ENCODE measurements at regions of chr19 and their contacts with region 1.

Region 1: DNA sequence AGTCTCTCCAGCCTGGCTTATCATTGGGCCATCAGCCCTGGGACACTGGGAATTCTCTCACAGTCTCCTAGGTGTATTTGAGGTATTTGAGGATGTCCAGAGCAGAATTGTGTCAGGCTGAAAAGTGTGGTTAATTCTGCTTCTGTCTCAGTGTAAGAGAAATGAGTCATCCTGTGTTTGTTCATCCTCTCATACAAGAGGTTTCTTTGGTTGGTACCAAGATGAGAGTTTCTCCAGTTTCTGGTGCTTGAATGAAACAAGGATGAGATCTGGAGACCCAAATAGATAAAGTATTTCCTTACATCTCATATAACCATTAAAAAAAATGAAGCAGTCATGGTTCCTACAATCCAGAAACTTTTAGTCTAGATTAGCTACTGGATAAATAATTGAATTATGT is 7.7 kb downstream of the ZNF253 start:
- DNase-seq: no peak
- H3K4me3 Mint-ChIP-seq: no peak overlapping the region
- H3K27ac Mint-ChIP-seq: no peak overlapping the region
- H3K4me1 Mint-ChIP-seq: peaks cover 37% of the 10 kb centered on the region
- H3K27me3 Mint-ChIP-seq: no peaks in the 10 kb centered on the region

Region 2: DNA sequence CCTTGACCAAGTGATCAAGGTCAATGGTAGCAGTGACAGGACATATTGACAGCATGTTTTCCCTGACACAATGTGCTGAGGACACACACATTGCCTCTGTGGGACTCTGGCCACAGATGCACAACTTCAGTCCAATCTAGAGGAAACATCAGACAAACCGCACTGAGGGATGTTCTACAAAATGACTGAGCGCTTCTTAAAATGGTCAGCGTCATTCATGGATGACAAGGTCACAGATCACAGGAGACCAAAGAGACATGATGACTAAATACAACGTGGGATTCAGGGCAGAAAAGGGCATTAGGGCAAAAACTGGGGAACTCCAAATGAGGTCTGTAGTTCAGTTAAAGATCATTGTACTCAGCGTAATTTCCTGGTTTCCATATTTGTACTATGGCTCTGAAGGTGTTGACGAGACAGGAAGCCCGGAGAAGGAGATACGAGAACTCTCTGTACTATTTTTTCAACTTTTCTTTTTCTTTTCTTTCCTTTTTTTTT is 275.5 kb before region 1 on chr19:
- CTCF ChIA-PET with region 1: no interaction called
- POLR2A ChIA-PET with region 1: no interaction called
- intact Hi-C with region 1: loop called (anchors 5 kb)
- DNase-seq: peak; percentile 74
- H3K4me3 Mint-ChIP-seq: peak overlapping the region; percentile 75
- H3K27ac Mint-ChIP-seq: peak overlapping the region; percentile 100
- H3K4me1 Mint-ChIP-seq: peaks cover 81% of the 10 kb centered on the region
- H3K27me3 Mint-ChIP-seq: no peaks in the 10 kb centered on the region

Region 3: DNA sequence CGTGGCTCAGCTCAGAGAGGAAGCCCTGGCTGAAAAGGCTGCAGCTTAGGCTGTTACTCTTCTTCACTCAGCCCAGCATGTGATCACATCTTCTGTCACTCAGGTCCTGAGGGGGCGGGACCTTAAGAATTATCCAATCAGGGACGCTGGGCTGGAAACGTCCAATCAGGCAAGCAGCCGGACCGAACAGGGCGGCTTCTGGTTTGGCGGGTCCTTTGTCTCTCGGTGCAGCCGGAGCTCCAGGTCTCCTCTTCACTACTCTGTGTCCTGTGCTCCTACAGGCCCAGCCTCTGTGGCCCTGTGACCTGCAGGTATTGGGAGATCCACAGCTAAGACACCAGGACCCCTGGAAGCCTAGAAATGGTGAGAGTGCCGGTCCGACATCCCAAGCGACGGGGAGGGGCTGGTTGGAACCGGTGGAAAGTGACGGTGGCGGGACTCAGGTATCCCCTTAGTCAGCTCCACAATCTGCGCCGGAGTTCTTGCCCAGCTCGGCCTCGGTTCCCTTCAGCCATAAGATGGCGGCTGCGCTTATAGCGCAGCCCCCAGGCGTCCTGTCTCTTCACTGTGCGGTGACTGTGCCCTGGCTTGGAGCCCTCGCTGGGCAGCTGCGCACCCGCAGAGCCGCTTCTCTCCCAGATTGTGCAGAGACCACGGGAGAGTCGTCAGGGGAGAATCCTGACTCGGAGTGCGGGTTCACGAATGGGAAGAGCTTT is 27.5 kb after region 1 on chr19 and contains the start of gene ZNF93:
- CTCF ChIA-PET with region 1: interaction called, 4 read pairs
- POLR2A ChIA-PET with region 1: interaction called, 9 read pairs
- intact Hi-C with region 1: loop called (anchors 1 kb)
- DNase-seq: peak; percentile 96
- H3K4me3 Mint-ChIP-seq: peak within 1 kb of the TSS; percentile 98
- H3K27ac Mint-ChIP-seq: peak within 1 kb of the TSS; percentile 96
- H3K4me1 Mint-ChIP-seq: peaks cover 35% of the 10 kb centered on the region
- H3K27me3 Mint-ChIP-seq: no peaks in the 10 kb centered on the region
- total RNA-seq, gene ZNF93: 15.6 to 17.0 TPM

Region 4: DNA sequence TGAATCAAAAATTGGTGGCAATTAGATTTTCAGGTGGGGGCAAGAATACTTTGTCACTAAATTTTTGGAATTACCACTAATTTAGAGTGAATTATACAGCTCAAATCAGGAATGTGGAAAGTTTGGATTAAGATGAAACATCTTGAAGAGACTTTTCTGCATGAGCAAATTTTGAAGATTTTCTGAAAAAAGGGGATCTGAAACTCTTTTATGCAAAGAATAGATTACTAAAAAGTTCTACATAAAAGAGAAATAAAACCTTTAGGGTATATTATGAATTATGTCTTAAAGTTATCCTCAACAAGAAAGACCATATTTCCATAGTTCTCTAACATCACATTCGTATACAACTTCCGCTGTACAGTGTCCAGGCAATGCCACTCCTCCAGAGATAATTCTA is 64.0 kb after region 1 on chr19:
- CTCF ChIA-PET with region 1: no interaction called
- POLR2A ChIA-PET with region 1: no interaction called
- intact Hi-C with region 1: no loop called
- DNase-seq: no peak
- H3K4me3 Mint-ChIP-seq: no peak overlapping the region
- H3K27ac Mint-ChIP-seq: no peak overlapping the region
- H3K4me1 Mint-ChIP-seq: no peaks in the 10 kb centered on the region
- H3K27me3 Mint-ChIP-seq: no peaks in the 10 kb centered on the region

Measured in activated CD4-positive, alpha-beta memory T cell treated with anti-CD3 and anti-CD28 coated beads for 36 hours (primary cell).